ENCODE measurements at regions of chr6 and their contacts with region 1.

Region 1: GRCh38 chr6:124791156-124791555 is 171.1 kb upstream of the RNF217 start:
- DNase-seq: no peak
- H3K4me3 ChIP-seq: no peak overlapping the region
- CTCF ChIP-seq: no peak
- POLR2A ChIP-seq: no peak

Region 2: GRCh38 chr6:124714728-124715127 is 76.4 kb before region 1 on chr6:
- intact Hi-C with region 1: loop called (anchors 2 kb)
- DNase-seq: no peak
- H3K4me3 ChIP-seq: no peak overlapping the region
- CTCF ChIP-seq: no peak
- POLR2A ChIP-seq: no peak

Measured in lower leg skin (tissue), 4 donors.